ENCODE measurements at regions of chr5 and their contacts with region 1.

Region 1: DNA sequence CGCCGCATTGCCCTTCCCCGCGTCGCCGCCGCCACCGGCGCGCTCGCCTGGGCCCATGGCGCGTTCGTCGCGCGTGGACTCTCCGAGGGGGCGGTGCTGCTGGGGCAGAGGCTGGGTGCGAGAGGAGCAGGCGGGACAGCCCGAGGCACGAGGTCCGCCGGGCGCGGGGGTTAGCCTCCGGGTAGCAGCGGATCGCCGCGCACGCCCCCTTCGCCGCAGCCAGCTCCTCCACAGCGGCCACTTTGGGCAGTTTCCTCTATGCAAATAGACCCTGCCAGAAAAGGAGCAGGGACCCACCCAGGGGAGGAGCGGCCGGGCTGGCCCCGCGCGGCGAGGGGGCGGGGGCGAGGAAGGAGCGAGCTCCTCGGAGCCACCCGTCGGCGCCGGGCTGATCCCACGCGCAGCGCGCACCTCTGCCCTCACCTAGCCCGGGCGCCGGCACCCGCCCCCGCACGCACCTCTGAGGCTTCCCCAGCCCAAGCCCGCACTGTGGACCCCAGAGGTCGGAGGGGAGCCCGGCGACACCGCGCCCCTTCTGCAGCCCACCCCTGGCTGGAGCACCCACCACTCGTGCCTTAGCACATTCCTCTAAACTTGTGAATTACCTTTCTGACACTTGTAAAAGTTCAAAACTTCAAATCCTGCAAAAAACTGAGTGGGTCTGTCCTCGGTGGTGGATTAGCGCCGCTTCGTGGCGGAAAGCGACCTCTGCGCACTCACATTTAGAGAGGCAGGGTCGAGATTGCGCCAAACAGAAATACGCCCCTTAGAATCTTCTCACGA is at the start of gene COL23A1:
- DNase-seq: peak; percentile 70
- ATAC-seq: peak; percentile 65
- H3K4me3 Mint-ChIP-seq: peak within 1 kb of the TSS; percentile 79
- H3K27ac Mint-ChIP-seq: no peak within 1 kb of the TSS
- H3K4me1 Mint-ChIP-seq: peaks cover 37% of the 10 kb centered on the region
- H3K27me3 Mint-ChIP-seq: peaks cover 30% of the 10 kb centered on the region
- CTCF ChIP-seq: peak; percentile 57
- total RNA-seq, gene COL23A1: 15.0 to 19.8 TPM (median 18.7 TPM) in 3 replicates

Region 2: GRCh38 chr5:178234750-178235587 is 355.4 kb before region 1 on chr5:
- CTCF ChIA-PET with region 1: interaction called, 11 read pairs
- POLR2A ChIA-PET with region 1: no interaction called
- DNase-seq: peak; percentile 93
- ATAC-seq: peak; percentile 53
- H3K4me3 Mint-ChIP-seq: no peak overlapping the region
- H3K27ac Mint-ChIP-seq: no peak overlapping the region
- H3K4me1 Mint-ChIP-seq: peaks cover 24% of the 10 kb centered on the region
- H3K27me3 Mint-ChIP-seq: no peaks in the 10 kb centered on the region
- CTCF ChIP-seq: peak; percentile 78

Region 3: GRCh38 chr5:178271726-178272479 is 318.4 kb before region 1 on chr5:
- CTCF ChIA-PET with region 1: interaction called, 12 read pairs
- POLR2A ChIA-PET with region 1: no interaction called
- DNase-seq: no peak
- ATAC-seq: no peak
- H3K4me3 Mint-ChIP-seq: no peak overlapping the region
- H3K27ac Mint-ChIP-seq: no peak overlapping the region
- H3K4me1 Mint-ChIP-seq: no peaks in the 10 kb centered on the region
- H3K27me3 Mint-ChIP-seq: peaks cover 4% of the 10 kb centered on the region
- CTCF ChIP-seq: no peak

Region 4: GRCh38 chr5:178279725-178280438 is 310.4 kb before region 1 on chr5:
- CTCF ChIA-PET with region 1: interaction called, 34 read pairs
- POLR2A ChIA-PET with region 1: no interaction called
- DNase-seq: peak; percentile 95
- ATAC-seq: peak; percentile 91
- H3K4me3 Mint-ChIP-seq: peak overlapping the region; percentile 41
- H3K27ac Mint-ChIP-seq: peak overlapping the region; percentile 63; the same call in 1 of the 2 replicates
- H3K4me1 Mint-ChIP-seq: peaks cover 4% of the 10 kb centered on the region
- H3K27me3 Mint-ChIP-seq: peaks cover 8% of the 10 kb centered on the region
- CTCF ChIP-seq: peak; percentile 74

Region 5: GRCh38 chr5:178288381-178289368 is 301.7 kb before region 1 on chr5:
- CTCF ChIA-PET with region 1: interaction called, 24 read pairs
- POLR2A ChIA-PET with region 1: no interaction called
- DNase-seq: no peak
- ATAC-seq: no peak
- H3K4me3 Mint-ChIP-seq: no peak overlapping the region
- H3K27ac Mint-ChIP-seq: peak overlapping the region; percentile 49; the same call in 1 of the 2 replicates
- H3K4me1 Mint-ChIP-seq: peaks cover 5% of the 10 kb centered on the region; the same call in 1 of the 2 replicates
- H3K27me3 Mint-ChIP-seq: no peaks in the 10 kb centered on the region
- CTCF ChIP-seq: no peak

Region 6: GRCh38 chr5:178467568-178468195 is 122.7 kb before region 1 on chr5:
- CTCF ChIA-PET with region 1: interaction called, 88 read pairs
- POLR2A ChIA-PET with region 1: no interaction called
- DNase-seq: no peak
- ATAC-seq: no peak
- H3K4me3 Mint-ChIP-seq: no peak overlapping the region
- H3K27ac Mint-ChIP-seq: no peak overlapping the region; the same call in 1 of the 2 replicates
- H3K4me1 Mint-ChIP-seq: peaks cover 19% of the 10 kb centered on the region
- H3K27me3 Mint-ChIP-seq: no peaks in the 10 kb centered on the region
- CTCF ChIP-seq: no peak

Region 7: DNA sequence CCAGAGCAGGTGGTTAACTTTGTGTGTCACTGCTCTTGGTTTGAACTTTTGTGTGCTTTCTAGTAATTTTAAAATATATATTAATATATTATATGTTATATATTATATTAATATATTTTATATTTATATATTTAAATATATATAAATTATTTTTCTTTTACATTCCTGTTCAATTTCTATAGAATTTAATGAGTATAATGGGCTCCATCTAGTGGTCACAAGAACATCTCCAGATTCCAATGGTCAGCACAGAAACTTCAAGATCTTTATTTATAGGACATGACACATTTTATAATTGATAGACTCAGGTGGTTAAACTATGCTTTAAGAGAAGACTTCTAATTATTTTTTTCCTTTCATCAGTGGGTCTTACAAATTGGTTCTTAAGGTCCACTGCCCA is 39.3 kb before region 1 on chr5:
- CTCF ChIA-PET with region 1: interaction called, 16 read pairs
- POLR2A ChIA-PET with region 1: no interaction called
- DNase-seq: no peak
- ATAC-seq: no peak
- H3K4me3 Mint-ChIP-seq: no peak overlapping the region
- H3K27ac Mint-ChIP-seq: no peak overlapping the region
- H3K4me1 Mint-ChIP-seq: peaks cover 54% of the 10 kb centered on the region
- H3K27me3 Mint-ChIP-seq: no peaks in the 10 kb centered on the region
- CTCF ChIP-seq: no peak

Region 8: GRCh38 chr5:178612299-178612698 is 22.0 kb after region 1 on chr5:
- CTCF ChIA-PET with region 1: no interaction called
- POLR2A ChIA-PET with region 1: no interaction called
- DNase-seq: no peak
- ATAC-seq: no peak
- H3K4me3 Mint-ChIP-seq: no peak overlapping the region
- H3K27ac Mint-ChIP-seq: no peak overlapping the region
- H3K4me1 Mint-ChIP-seq: no peaks in the 10 kb centered on the region
- H3K27me3 Mint-ChIP-seq: no peaks in the 10 kb centered on the region
- CTCF ChIP-seq: no peak

Region 9: DNA sequence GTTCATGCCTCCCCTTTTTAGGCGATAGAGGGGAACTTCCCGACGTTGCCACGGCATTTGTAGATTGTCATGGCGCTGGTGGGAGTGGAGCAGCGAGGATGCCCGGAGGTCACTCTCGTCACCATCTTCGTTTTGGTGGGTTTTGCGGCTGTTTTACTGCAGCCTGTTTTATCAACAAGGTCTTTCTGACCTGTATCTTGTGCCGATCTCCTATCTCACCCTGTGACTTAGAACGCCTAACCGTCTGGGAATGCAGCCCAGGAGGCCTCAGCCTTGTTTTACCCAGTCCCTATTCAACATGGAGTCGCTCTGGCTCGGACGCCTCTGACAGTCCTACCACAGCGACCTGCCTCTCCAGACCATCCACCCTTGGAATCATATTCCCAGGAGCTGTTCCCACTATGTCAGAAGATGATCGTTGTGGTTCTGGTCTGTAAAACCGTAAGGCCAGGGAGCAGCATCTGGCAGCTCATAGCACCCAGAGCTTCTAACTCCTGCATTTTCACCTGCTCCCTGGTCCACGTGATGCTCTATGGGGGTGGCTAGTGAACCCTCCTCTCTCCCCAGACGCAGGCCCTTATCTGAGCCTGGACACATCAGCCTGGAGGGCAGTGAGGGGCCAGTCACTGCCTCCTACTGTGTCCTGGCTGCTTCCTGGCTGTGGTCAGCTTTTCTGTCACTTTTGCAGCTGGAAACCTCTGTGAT is 71.7 kb after region 1 on chr5:
- CTCF ChIA-PET with region 1: no interaction called
- POLR2A ChIA-PET with region 1: no interaction called
- DNase-seq: no peak
- ATAC-seq: no peak
- H3K4me3 Mint-ChIP-seq: no peak overlapping the region
- H3K27ac Mint-ChIP-seq: no peak overlapping the region
- H3K4me1 Mint-ChIP-seq: no peaks in the 10 kb centered on the region
- H3K27me3 Mint-ChIP-seq: no peaks in the 10 kb centered on the region
- CTCF ChIP-seq: no peak